Right lobe of liver (tissue), 6 donors: ENCODE measurements at regions of chr6 and their contacts with region 1.

Region 1: DNA sequence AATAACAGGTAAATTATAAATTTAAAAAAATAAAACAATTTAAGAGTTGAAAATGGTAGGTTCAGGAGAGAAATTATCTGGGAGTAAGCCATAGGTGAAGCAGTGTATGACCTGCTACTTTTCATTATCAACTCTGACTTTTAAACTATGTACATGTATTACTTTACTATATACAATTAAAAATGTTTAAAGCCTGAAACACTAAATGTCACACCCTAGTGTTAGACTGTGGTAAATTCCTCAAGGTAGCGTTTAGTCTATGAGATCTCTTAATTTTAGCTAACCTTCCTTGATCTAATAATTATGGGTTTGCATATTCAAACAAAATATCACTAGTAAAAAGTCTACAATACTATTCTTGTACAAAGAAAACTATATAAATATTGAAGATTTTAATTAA is 22.3 kb upstream of the TBC1D32 start:
- DNase-seq: no peak
- ATAC-seq: no peak
- H3K4me3 ChIP-seq: no peak overlapping the region
- H3K27ac ChIP-seq: no peak overlapping the region
- H3K4me1 ChIP-seq: no peaks in the 10 kb centered on the region
- H3K27me3 ChIP-seq: no peaks in the 10 kb centered on the region
- CTCF ChIP-seq: peak in 1 of 4 donors; percentile 5
- POLR2A ChIP-seq: no peak

Region 2: DNA sequence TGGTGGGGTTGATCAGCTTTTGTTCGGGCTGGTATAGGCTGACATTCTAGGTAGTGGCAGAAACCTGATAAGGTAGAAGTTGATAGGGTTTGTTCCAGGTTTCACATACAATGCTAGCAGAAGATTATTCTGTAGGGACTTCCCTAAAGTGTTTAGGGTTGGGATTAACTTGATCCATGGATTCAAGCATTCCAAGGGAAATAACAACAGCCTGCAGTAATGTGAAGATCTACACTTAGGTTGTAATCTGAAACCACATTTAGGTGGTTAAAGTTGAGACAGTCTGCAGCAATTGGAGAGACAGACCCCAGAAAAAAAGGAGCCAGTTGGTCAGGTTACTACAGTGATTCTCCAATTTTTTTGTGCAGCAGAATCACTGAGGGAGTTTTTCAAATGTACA is 135.0 kb after region 1 on chr6:
- intact Hi-C with region 1: loop called in 1 of 2 experiments (anchors 5 kb)
- DNase-seq: no peak
- ATAC-seq: no peak
- H3K4me3 ChIP-seq: no peak overlapping the region
- H3K27ac ChIP-seq: no peak overlapping the region
- H3K4me1 ChIP-seq: no peaks in the 10 kb centered on the region
- H3K27me3 ChIP-seq: no peaks in the 10 kb centered on the region
- CTCF ChIP-seq: no peak
- POLR2A ChIP-seq: no peak